Ascending aorta (tissue), 2 donors: ENCODE measurements at regions of chr4 and their contacts with region 1.

Region 1: DNA sequence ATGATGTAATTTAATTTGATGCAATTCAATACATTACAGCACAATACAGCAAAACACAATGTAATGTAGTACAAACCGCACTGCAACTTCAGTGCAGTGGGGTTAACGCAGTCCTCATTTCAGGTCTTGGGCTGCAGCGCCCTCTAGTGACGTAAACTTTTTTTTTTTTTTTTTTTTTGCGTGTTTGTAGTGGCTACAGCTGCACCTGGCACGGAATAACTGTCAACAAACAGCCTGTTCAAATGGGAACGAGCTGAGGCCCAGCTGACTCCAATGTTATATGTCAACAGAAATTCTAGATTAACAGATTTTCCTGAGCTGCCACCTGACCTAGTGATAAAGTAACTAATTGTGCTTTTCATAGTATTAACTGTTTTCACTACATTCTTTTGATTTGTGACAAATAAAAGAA is 33.5 kb upstream of the RASSF6 start:
- DNase-seq: no peak
- H3K4me3 ChIP-seq: no peak overlapping the region
- H3K27ac ChIP-seq: no peak overlapping the region
- H3K4me1 ChIP-seq: peaks cover 0 to 6% of the 10 kb centered on the region in 2 donors
- H3K27me3 ChIP-seq: no peaks in the 10 kb centered on the region
- CTCF ChIP-seq: peak; percentile 13 to 64 (median 42)

Region 2: DNA sequence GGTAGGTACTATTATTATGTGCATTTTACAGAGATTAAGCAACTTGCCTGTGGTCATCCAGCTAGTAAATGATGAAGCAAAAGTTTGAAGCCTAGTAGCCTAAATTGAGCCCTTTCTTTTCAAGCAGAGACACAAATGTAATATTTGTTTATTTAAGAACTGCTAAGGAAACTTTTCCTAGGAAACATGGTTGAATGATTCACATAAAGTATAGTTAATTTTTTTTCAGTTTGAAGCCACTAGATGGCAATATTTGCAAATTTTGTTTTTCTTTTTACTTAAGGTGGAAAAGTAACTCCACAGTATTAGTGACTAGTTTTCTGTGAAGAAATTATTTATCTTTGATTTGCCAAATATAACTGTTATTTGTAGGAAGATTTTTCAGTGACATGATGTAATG is 342.3 kb before region 1 on chr4:
- intact Hi-C with region 1: loop called (anchors 2 kb)
- DNase-seq: no peak
- H3K4me3 ChIP-seq: no peak overlapping the region
- H3K27ac ChIP-seq: no peak overlapping the region
- H3K4me1 ChIP-seq: no peaks in the 10 kb centered on the region
- H3K27me3 ChIP-seq: no peaks in the 10 kb centered on the region
- CTCF ChIP-seq: peak in 1 of 3 experiments; percentile 38

Region 3: DNA sequence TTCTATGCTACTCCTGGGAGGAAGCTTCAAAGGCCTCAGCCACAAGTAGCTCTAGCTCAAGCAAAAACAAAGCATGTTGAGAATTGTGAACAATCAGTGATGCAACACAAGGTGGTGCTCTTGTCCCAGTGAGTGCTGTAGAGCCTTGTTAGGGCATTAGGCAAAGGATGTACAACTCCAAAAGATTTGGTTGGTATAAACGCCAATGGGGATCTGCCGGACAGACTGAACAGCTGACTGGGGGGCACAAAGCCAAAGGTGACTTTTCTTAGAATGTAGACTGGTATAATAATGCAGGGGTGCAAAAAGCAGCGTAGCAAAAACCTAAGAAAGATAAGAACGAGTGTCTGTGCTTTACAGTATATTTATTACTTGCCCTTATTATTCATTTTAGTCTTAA is 312.2 kb before region 1 on chr4:
- intact Hi-C with region 1: loop called (anchors 5 kb)
- DNase-seq: no peak
- H3K4me3 ChIP-seq: no peak overlapping the region
- H3K27ac ChIP-seq: no peak overlapping the region
- H3K4me1 ChIP-seq: no peaks in the 10 kb centered on the region
- H3K27me3 ChIP-seq: no peaks in the 10 kb centered on the region
- CTCF ChIP-seq: peak in 2 of 3 experiments; percentile 13 to 41

Region 4: GRCh38 chr4:73917081-73917501 is 263.4 kb after region 1 on chr4:
- intact Hi-C with region 1: no loop called
- DNase-seq: no peak
- H3K4me3 ChIP-seq: no peak overlapping the region
- H3K27ac ChIP-seq: no peak overlapping the region
- H3K4me1 ChIP-seq: no peaks in the 10 kb centered on the region
- H3K27me3 ChIP-seq: no peaks in the 10 kb centered on the region
- CTCF ChIP-seq: no peak